ENCODE measurements at regions of chr17 and their contacts with region 1.

Region 1: GRCh38 chr17:9512323-9513168 is 63.1 kb downstream of the STX8 start:
- DNase-seq: no peak
- ATAC-seq: peak in 1 of 4 donors; percentile 56
- H3K4me3 ChIP-seq: no peak overlapping the region
- H3K27ac ChIP-seq: no peak overlapping the region
- H3K4me1 ChIP-seq: no peaks in the 10 kb centered on the region
- H3K27me3 ChIP-seq: no peaks in the 10 kb centered on the region
- CTCF ChIP-seq: no peak
- POLR2A ChIP-seq: no peak

Region 2: DNA sequence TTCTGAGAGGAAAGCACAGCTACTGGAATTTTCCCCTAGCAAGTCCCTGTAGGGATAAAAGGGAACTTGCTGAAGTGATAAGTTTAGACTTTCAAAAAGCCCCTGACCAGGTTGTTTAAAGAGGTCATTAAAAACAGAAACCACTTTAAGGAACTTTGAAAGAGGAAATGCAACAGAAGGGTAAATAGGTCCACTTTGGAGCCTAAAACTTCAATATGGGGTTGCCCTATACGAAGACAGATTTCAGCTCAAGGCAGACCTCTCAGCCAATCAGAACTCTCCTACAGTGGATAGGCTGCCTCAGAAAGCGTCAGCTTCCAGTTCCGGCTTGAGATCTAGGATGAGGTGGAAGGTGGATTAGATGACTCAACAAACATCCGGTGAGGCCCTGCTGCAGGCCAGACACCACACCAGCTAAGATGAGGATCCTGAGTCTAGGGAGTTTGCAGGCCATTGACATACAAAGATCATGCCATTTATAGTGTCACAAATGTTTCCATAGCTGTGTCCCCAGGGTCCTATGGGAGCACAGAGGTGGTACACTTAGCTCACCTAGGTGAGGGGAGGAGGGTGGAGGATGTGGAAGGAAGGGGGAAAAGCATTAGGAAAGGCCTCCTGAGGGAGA is 705.5 kb before region 1 on chr17:
- intact Hi-C with region 1: loop called in 1 of 10 experiments (anchors 10 kb)
- DNase-seq: no peak
- ATAC-seq: peak in 2 of 4 donors; percentile 38 to 47
- H3K4me3 ChIP-seq: no peak overlapping the region
- H3K27ac ChIP-seq: peak overlapping the region in 2 of 12 donors; percentile 23 to 81
- H3K4me1 ChIP-seq: peaks cover 0 to 16% (median 0%) of the 10 kb centered on the region in 12 donors
- H3K27me3 ChIP-seq: no peaks in the 10 kb centered on the region
- CTCF ChIP-seq: no peak
- POLR2A ChIP-seq: no peak

Region 3: GRCh38 chr17:9177212-9177611 is 335.3 kb before region 1 on chr17:
- intact Hi-C with region 1: loop called in 1 of 10 experiments (anchors 10 kb)
- DNase-seq: peak in 4 of 5 donors; percentile 25 to 71 (median 52)
- ATAC-seq: peak; percentile 16 to 59 (median 40)
- H3K4me3 ChIP-seq: no peak overlapping the region
- H3K27ac ChIP-seq: no peak overlapping the region
- H3K4me1 ChIP-seq: peaks cover 0 to 31% (median 14%) of the 10 kb centered on the region in 12 donors
- H3K27me3 ChIP-seq: no peaks in the 10 kb centered on the region
- CTCF ChIP-seq: no peak
- POLR2A ChIP-seq: no peak

Region 4: DNA sequence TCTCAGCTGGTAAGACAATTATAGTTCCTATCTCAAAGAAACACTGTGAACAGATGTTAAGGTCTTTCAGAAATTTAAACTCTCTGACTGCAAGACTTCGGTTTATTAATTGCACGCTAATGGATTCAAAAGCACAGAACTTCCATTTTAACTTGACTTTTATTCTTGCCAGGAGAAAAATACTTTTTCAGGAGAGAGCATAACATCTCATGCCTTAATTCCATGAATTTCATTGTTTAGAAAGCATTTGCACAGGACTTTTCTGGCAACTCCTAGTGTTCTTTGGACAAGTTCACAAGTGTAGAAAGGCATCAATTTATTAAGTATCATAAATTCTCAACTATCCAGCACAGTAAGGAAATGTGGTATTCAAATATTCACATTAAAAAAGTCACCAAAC is 40.6 kb after region 1 on chr17:
- intact Hi-C with region 1: no loop called
- DNase-seq: no peak
- ATAC-seq: no peak
- H3K4me3 ChIP-seq: no peak overlapping the region
- H3K27ac ChIP-seq: no peak overlapping the region
- H3K4me1 ChIP-seq: peaks cover 0 to 9% (median 0%) of the 10 kb centered on the region in 12 donors
- H3K27me3 ChIP-seq: no peaks in the 10 kb centered on the region
- CTCF ChIP-seq: no peak
- POLR2A ChIP-seq: no peak

Region 5: DNA sequence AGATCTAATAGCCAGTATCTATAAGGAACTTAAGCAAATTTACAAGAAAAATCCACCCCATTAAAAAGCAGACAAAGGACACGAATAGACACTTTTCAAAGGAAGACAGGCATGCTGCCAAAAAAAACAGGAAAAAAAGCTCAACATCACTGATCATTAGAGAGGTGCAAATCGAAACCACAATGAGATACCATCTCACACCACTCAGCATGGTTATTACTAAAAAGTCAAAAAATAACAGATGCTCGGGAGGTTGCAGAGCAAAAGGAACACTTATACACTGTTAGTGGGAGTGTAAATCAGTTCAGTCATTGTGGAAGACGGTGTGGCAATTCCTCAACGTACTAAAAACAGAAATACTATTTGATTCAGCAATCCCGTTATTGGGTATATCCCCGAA is 53.5 kb after region 1 on chr17:
- intact Hi-C with region 1: no loop called
- DNase-seq: no peak
- ATAC-seq: no peak
- H3K4me3 ChIP-seq: peak overlapping the region in 1 of 12 donors; percentile 16
- H3K27ac ChIP-seq: no peak overlapping the region
- H3K4me1 ChIP-seq: peaks cover 0 to 14% (median 0%) of the 10 kb centered on the region in 12 donors
- H3K27me3 ChIP-seq: no peaks in the 10 kb centered on the region
- CTCF ChIP-seq: no peak
- POLR2A ChIP-seq: no peak

Region 6: GRCh38 chr17:9576521-9577372 is 64.2 kb after region 1 on chr17 and contains the start of gene CFAP52:
- intact Hi-C with region 1: no loop called
- DNase-seq: peak; percentile 69 to 85 (median 82)
- ATAC-seq: peak; percentile 78 to 90 (median 86)
- H3K4me3 ChIP-seq: peak within 1 kb of the TSS; percentile 59 to 99 (median 82)
- H3K27ac ChIP-seq: peak within 1 kb of the TSS in 11 of 12 donors; percentile 41 to 81 (median 63)
- H3K4me1 ChIP-seq: peaks cover 0 to 29% (median 16%) of the 10 kb centered on the region in 12 donors
- H3K27me3 ChIP-seq: no peaks in the 10 kb centered on the region
- CTCF ChIP-seq: peak in 11 of 12 donors; percentile 50 to 82 (median 69)
- POLR2A ChIP-seq: no peak
- total RNA-seq, gene CFAP52: 0.87 TPM in 1 of 9 donors, not detected in the others

Region 7: DNA sequence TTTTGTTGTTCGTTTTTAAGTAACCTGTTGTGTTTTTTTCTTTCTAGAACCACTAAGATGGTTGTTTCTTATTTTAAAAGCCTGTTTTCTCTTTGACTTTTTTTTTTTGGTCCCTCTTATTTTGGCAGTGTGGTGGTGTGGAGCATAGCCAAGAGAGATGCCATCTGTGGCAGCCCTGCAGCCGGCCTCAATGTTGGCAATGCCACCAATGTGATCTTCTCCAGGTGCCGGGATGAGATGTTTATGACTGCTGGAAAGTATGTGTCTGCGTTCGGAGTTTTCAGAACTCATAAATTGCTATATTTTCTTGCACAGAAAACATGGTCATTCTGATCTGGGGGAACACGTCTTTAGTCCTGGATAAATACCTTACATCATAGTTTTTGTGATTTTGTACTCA is 81.5 kb after region 1 on chr17:
- intact Hi-C with region 1: no loop called
- DNase-seq: no peak
- ATAC-seq: no peak
- H3K4me3 ChIP-seq: no peak overlapping the region
- H3K27ac ChIP-seq: no peak overlapping the region
- H3K4me1 ChIP-seq: no peaks in the 10 kb centered on the region
- H3K27me3 ChIP-seq: peaks cover 0 to 6% (median 0%) of the 10 kb centered on the region in 9 donors
- CTCF ChIP-seq: no peak
- POLR2A ChIP-seq: no peak